PC-9 (cell line): ENCODE measurements at regions of chrX and their contacts with region 1.

Region 1: DNA sequence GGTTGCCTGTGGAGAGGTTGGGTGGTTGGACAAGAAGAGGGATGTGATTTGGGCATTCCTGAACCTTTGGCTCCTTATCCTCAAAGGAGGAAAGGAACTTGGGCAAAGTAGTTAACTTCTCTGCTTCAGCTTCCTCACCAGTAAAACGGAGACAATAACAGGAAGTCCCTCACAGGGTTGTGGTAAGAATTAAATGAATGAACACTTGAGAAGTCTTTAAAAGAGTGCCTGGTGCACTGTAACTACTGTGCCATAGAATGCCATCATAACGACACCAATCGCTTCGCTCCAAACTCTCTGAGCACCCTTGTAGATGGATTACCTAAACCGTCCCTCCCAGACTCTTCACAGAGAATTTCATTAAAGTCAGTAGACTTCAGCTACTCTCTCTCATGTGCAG is 10.5 kb downstream of the ZCCHC18 start:
- DNase-seq: no peak
- H3K4me3 ChIP-seq: no peak overlapping the region
- H3K27ac ChIP-seq: no peak overlapping the region
- H3K4me1 ChIP-seq: no peaks in the 10 kb centered on the region
- H3K27me3 ChIP-seq: no peaks in the 10 kb centered on the region
- CTCF ChIP-seq: no peak

Region 2: GRCh38 chrX:102976286-102976685 is 1146.5 kb before region 1 on chrX:
- CTCF ChIA-PET with region 1: no interaction called
- POLR2A ChIA-PET with region 1: no interaction called
- intact Hi-C with region 1: no loop called
- DNase-seq: no peak
- H3K4me3 ChIP-seq: no peak overlapping the region
- H3K27ac ChIP-seq: peak overlapping the region; percentile 52; the same call in 1 of the 2 replicates
- H3K4me1 ChIP-seq: peaks cover 21% of the 10 kb centered on the region; the same call in 1 of the 2 replicates
- H3K27me3 ChIP-seq: no peaks in the 10 kb centered on the region
- CTCF ChIP-seq: no peak

Region 3: DNA sequence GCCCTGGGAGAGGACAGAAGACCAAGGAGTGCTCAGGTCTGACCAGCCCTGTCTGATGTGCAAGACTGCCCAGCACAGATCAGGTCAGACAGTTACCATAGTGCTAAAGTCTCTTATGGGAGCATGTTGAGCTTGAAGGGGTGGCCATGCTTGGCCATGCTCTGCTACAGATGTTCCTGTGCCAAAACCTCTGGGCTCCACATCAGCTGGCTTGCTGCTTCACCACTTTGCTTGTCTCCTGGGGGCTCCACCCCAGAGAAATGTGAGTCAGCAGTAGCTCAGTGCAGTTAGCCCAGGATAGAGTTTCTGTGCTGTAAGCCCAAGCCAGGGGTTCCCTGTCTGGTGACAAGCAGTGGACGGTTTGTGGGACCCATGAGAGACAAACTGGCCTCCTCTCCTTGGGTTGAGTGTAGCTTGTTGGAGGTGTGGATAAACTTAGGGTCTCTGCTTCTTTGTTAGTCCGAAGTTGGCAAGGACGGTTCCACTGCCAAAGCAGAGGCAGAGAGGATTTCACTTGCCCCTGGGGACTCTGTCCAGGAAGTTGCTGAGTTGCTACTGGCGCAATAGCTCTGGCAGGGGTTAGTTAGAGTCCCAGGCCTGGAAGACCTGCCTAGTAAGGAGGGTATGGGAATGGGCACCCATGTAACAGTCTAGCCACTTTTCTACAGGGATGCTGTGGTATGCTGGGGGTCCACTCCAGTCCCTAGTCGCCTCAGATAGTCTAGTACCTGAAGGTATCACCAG is 38.1 kb before region 1 on chrX:
- CTCF ChIA-PET with region 1: no interaction called
- POLR2A ChIA-PET with region 1: no interaction called
- intact Hi-C with region 1: no loop called
- DNase-seq: no peak
- H3K4me3 ChIP-seq: no peak overlapping the region
- H3K27ac ChIP-seq: no peak overlapping the region
- H3K4me1 ChIP-seq: no peaks in the 10 kb centered on the region
- H3K27me3 ChIP-seq: peaks cover 10% of the 10 kb centered on the region
- CTCF ChIP-seq: no peak

Region 4: GRCh38 chrX:104156630-104157529 is 34.1 kb after region 1 on chrX and contains the start of gene SLC25A53:
- CTCF ChIA-PET with region 1: no interaction called
- POLR2A ChIA-PET with region 1: interaction called, 17 read pairs
- intact Hi-C with region 1: no loop called
- DNase-seq: peak; percentile 68 to 70
- H3K4me3 ChIP-seq: peak within 1 kb of the TSS; percentile 82
- H3K27ac ChIP-seq: peak within 1 kb of the TSS; percentile 82
- H3K4me1 ChIP-seq: 0 out of 2 replicates have a peak, but pooled peaks cover 4% of the 10 kb centered on the region
- H3K27me3 ChIP-seq: no peaks in the 10 kb centered on the region
- CTCF ChIP-seq: no peak
- total RNA-seq, gene SLC25A53: 4.5 and 6.4 TPM in 2 replicates

Region 5: GRCh38 chrX:104310090-104310489 is 187.3 kb after region 1 on chrX:
- CTCF ChIA-PET with region 1: no interaction called
- POLR2A ChIA-PET with region 1: no interaction called
- intact Hi-C with region 1: no loop called
- DNase-seq: peak in 1 of 2 experiments; percentile 41
- H3K4me3 ChIP-seq: no peak overlapping the region
- H3K27ac ChIP-seq: no peak overlapping the region
- H3K4me1 ChIP-seq: peaks cover 24% of the 10 kb centered on the region
- H3K27me3 ChIP-seq: no peaks in the 10 kb centered on the region
- CTCF ChIP-seq: peak; percentile 58

Region 6: GRCh38 chrX:104469771-104470170 is 346.9 kb after region 1 on chrX:
- CTCF ChIA-PET with region 1: no interaction called
- POLR2A ChIA-PET with region 1: interaction called, 12 read pairs
- intact Hi-C with region 1: no loop called
- DNase-seq: no peak
- H3K4me3 ChIP-seq: no peak overlapping the region
- H3K27ac ChIP-seq: no peak overlapping the region
- H3K4me1 ChIP-seq: no peaks in the 10 kb centered on the region
- H3K27me3 ChIP-seq: no peaks in the 10 kb centered on the region
- CTCF ChIP-seq: no peak